ENCODE measurements at regions of chr13 and their contacts with region 1.

Region 1: DNA sequence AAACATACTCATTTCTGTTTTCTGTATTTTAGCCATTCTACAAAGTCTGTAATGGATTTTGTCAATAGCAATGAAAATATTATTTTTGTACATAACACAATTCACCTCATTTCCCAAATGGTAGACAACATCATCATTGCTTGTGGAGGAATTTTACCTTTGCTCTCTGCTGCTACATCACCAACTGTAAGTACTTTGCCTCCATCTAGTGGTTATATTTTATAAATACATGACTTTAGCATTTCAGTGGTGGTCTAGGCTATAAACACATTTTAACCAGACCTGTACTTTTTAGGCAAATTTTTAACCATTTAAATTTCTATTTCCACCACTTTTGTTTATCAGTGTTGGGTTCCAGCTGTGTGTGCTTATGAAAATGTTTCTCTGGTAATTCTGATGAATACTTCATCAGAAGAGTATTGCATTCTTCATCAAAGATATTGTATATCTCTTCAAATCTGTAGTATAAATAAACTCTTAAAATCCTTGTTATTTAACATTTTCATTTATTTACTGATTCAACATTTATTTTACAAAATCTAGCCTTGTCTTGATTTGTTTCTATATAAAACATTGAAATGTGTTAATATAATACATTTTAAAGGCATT is 222.4 kb downstream of the NBEA start:
- H3K4me3 Mint-ChIP-seq: no peak overlapping the region
- H3K27ac Mint-ChIP-seq: no peak overlapping the region
- H3K4me1 Mint-ChIP-seq: peaks cover 9% of the 10 kb centered on the region
- H3K27me3 Mint-ChIP-seq: no peaks in the 10 kb centered on the region

Region 2: DNA sequence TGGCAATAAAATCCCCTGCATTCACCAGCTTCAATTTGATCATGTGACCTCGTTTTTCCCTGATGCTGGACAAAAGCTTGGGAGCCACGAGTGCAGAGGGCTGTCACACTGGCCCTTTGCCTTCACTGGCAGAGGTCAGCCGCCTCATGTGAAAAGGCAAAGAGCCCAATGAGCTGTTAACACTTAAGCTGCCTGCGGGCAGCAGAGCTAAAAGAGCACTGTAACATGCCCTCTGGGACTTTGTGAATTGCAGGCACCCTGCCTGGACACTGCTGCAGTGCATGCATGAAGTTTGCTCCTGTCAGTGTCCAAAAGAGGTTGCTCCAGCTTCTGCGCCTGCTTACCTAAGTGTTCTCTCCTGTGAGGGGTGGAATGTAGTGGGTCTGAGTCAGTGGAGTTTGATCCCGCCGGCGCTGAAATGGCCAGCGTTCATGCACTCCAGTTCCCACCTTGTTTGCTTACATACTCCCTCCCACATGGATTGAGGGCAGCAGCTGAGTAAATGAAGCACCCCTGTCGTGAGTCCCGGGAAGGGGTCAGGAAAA is 1152.8 kb before region 1 on chr13:
- intact Hi-C with region 1: no loop called
- H3K4me3 Mint-ChIP-seq: no peak overlapping the region
- H3K27ac Mint-ChIP-seq: no peak overlapping the region
- H3K4me1 Mint-ChIP-seq: no peaks in the 10 kb centered on the region
- H3K27me3 Mint-ChIP-seq: no peaks in the 10 kb centered on the region

Region 3: GRCh38 chr13:34941835-34942731 is 222.3 kb before region 1 on chr13 and contains the start of gene NBEA:
- intact Hi-C with region 1: loop called (anchors 5 kb)
- H3K4me3 Mint-ChIP-seq: peak within 1 kb of the TSS; percentile 92
- H3K27ac Mint-ChIP-seq: peak within 1 kb of the TSS; percentile 79
- H3K4me1 Mint-ChIP-seq: peaks cover 23% of the 10 kb centered on the region
- H3K27me3 Mint-ChIP-seq: peaks cover 57% of the 10 kb centered on the region

Region 4: DNA sequence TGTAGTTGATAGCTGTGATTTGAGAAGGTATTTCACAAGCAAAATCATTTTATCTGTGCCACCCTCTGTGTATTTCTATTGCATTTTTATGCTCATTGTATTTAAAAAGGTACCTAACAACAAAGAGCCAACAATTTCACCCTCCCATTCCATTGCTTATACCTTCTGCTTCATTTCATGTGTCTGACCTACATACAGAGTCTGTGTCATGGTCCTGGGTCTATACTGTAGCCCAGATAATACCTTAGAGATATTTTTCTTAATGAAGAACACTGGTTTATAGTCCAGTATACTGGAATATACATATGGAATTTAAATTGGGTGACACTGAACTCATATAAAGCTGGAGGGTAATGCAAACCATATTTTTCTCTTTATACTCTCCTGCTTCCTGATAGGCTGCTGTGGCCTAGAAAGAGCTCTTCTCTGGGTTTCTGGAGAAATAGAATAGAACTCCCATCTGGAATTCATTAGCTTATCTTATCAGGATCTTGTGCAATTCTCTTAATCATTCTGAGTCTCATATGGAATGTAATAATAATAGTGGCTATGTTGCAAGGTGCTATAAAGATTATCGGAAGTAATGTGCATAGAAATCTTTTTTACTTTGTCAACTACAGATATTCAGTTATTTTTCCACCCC is 1213.5 kb after region 1 on chr13:
- intact Hi-C with region 1: no loop called
- H3K4me3 Mint-ChIP-seq: no peak overlapping the region
- H3K27ac Mint-ChIP-seq: no peak overlapping the region
- H3K4me1 Mint-ChIP-seq: no peaks in the 10 kb centered on the region
- H3K27me3 Mint-ChIP-seq: no peaks in the 10 kb centered on the region